CD4-positive, alpha-beta memory T cell (primary cell): ENCODE measurements at regions of chr14 and their contacts with region 1.

Region 1: GRCh38 chr14:49862089-49862673 is 9.6 kb upstream of the NEMF start:
- DNase-seq: peak; percentile 85 to 91 (median 88)
- H3K4me3 ChIP-seq: peak overlapping the region; percentile 61 to 76
- H3K4me3 Mint-ChIP-seq: no peak overlapping the region
- H3K27ac ChIP-seq: peak overlapping the region; percentile 97
- H3K27ac Mint-ChIP-seq: no peak overlapping the region
- H3K4me1 ChIP-seq: peaks cover 38% of the 10 kb centered on the region
- H3K4me1 Mint-ChIP-seq: peaks cover 0 to 11% (median 6%) of the 10 kb centered on the region in 4 donors
- H3K27me3 ChIP-seq: no peaks in the 10 kb centered on the region
- H3K27me3 Mint-ChIP-seq: peaks cover 3 to 8% of the 10 kb centered on the region in 2 donors

Region 2: GRCh38 chr14:49620182-49621113 is 241.7 kb before region 1 on chr14 and contains the starts of genes MGAT2 and RPL36AL:
- CTCF ChIA-PET with region 1: interaction called, 9 read pairs
- POLR2A ChIA-PET with region 1: interaction called, 28 read pairs
- intact Hi-C with region 1: no loop called
- DNase-seq: peak; percentile 95 to 97 (median 96)
- H3K4me3 ChIP-seq: peak within 1 kb of the TSS; percentile 99 to 100
- H3K4me3 Mint-ChIP-seq: peak within 1 kb of the TSS; percentile 95 to 99 (median 96)
- H3K27ac ChIP-seq: peak within 1 kb of the TSS; percentile 98
- H3K27ac Mint-ChIP-seq: peak within 1 kb of the TSS; percentile 98 to 100 (median 99)
- H3K4me1 ChIP-seq: peaks cover 65% of the 10 kb centered on the region
- H3K4me1 Mint-ChIP-seq: peaks cover 34 to 69% (median 43%) of the 10 kb centered on the region in 4 donors
- H3K27me3 ChIP-seq: no peaks in the 10 kb centered on the region
- H3K27me3 Mint-ChIP-seq: no peaks in the 10 kb centered on the region
- total RNA-seq, gene MGAT2: 58.5 to 58.7 TPM
- total RNA-seq, gene RPL36AL: 416 to 441 TPM

Region 3: GRCh38 chr14:49659526-49660455 is 202.4 kb before region 1 on chr14:
- CTCF ChIA-PET with region 1: no interaction called
- POLR2A ChIA-PET with region 1: no interaction called
- intact Hi-C with region 1: no loop called
- DNase-seq: no peak
- H3K4me3 ChIP-seq: no peak overlapping the region
- H3K4me3 Mint-ChIP-seq: no peak overlapping the region
- H3K27ac ChIP-seq: no peak overlapping the region
- H3K27ac Mint-ChIP-seq: peak overlapping the region in 1 of 7 donors; percentile 70
- H3K4me1 ChIP-seq: no peaks in the 10 kb centered on the region
- H3K4me1 Mint-ChIP-seq: no peaks in the 10 kb centered on the region
- H3K27me3 ChIP-seq: no peaks in the 10 kb centered on the region
- H3K27me3 Mint-ChIP-seq: no peaks in the 10 kb centered on the region

Region 4: GRCh38 chr14:49892636-49893308 is 30.6 kb after region 1 on chr14 and contains the start of gene ARF6:
- CTCF ChIA-PET with region 1: interaction called, 49 read pairs
- POLR2A ChIA-PET with region 1: interaction called, 89 read pairs
- intact Hi-C with region 1: loop called (anchors 1 kb)
- DNase-seq: peak; percentile 92 to 94 (median 92)
- H3K4me3 ChIP-seq: peak within 1 kb of the TSS; percentile 75 to 100
- H3K4me3 Mint-ChIP-seq: peak within 1 kb of the TSS; percentile 95 to 99 (median 98)
- H3K27ac ChIP-seq: peak within 1 kb of the TSS; percentile 98
- H3K27ac Mint-ChIP-seq: peak within 1 kb of the TSS; percentile 93 to 100 (median 99)
- H3K4me1 ChIP-seq: peaks cover 35% of the 10 kb centered on the region
- H3K4me1 Mint-ChIP-seq: peaks cover 13 to 45% (median 22%) of the 10 kb centered on the region in 4 donors
- H3K27me3 ChIP-seq: no peaks in the 10 kb centered on the region
- H3K27me3 Mint-ChIP-seq: no peaks in the 10 kb centered on the region
- total RNA-seq, gene ARF6: 116 to 124 TPM

Region 5: GRCh38 chr14:49977126-49977841 is 115.1 kb after region 1 on chr14:
- CTCF ChIA-PET with region 1: interaction called, 72 read pairs
- POLR2A ChIA-PET with region 1: interaction called, 81 read pairs
- intact Hi-C with region 1: no loop called
- DNase-seq: peak; percentile 48 to 66 (median 61)
- H3K4me3 ChIP-seq: peak overlapping the region; percentile 50 to 53
- H3K4me3 Mint-ChIP-seq: peak overlapping the region; percentile 75 to 89 (median 84)
- H3K27ac ChIP-seq: peak overlapping the region; percentile 48
- H3K27ac Mint-ChIP-seq: peak overlapping the region; percentile 91 to 95 (median 93)
- H3K4me1 ChIP-seq: peaks cover 100% of the 10 kb centered on the region
- H3K4me1 Mint-ChIP-seq: peaks cover 60 to 96% (median 87%) of the 10 kb centered on the region in 4 donors
- H3K27me3 ChIP-seq: no peaks in the 10 kb centered on the region
- H3K27me3 Mint-ChIP-seq: no peaks in the 10 kb centered on the region

Region 6: DNA sequence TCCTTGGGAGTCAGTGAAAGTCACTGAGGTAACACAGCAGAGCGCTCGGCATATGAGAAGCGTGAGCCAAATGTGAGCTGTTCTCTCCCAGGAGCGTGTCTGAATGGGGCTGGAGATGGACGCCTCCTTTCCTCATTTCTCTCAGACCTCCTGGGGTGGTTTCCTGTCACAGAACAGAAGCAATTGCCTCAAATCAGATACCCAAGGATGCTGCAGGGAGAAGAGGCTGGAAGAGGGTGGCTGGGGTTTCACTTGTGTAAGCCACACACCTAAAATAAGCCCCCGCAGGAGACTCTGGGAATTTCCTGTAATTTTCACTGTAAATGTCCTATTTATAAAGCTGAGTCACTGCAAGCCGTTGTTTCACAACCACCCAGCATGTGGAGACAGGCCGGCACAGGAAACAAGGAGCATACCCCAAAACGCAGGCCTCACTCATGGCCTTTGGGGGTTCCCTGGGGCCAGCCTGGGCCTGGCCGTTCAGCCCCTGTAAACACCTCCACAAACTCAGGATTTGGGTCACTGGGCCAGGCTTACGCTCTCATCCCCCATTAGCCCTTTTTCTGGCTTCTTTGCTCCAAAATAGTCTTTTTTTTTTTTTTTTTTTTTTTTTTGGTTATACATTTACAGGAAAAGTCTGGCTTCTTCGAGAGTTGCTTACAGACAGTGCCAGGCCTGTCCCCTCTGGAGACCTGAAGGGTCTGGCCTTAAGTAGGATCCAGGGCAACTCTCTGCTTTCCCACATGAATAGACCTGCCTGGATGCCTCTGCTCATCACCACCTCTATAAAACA is 198.9 kb after region 1 on chr14:
- CTCF ChIA-PET with region 1: interaction called, 182 read pairs
- POLR2A ChIA-PET with region 1: interaction called, 209 read pairs
- intact Hi-C with region 1: loop called (anchors 1 kb)
- DNase-seq: peak in 3 of 5 donors; percentile 15 to 76 (median 22)
- H3K4me3 ChIP-seq: peak overlapping the region in 1 of 2 donors; percentile 62
- H3K4me3 Mint-ChIP-seq: peak overlapping the region in 7 of 8 donors; percentile 87 to 98 (median 94)
- H3K27ac ChIP-seq: peak overlapping the region; percentile 83
- H3K27ac Mint-ChIP-seq: peak overlapping the region; percentile 92 to 100 (median 99)
- H3K4me1 ChIP-seq: peaks cover 82% of the 10 kb centered on the region
- H3K4me1 Mint-ChIP-seq: peaks cover 59 to 95% (median 78%) of the 10 kb centered on the region in 4 donors
- H3K27me3 ChIP-seq: no peaks in the 10 kb centered on the region
- H3K27me3 Mint-ChIP-seq: no peaks in the 10 kb centered on the region

Region 7: GRCh38 chr14:50116181-50116956 is 254.2 kb after region 1 on chr14 and contains the start of gene VCPKMT:
- CTCF ChIA-PET with region 1: interaction called, 39 read pairs
- POLR2A ChIA-PET with region 1: interaction called, 77 read pairs
- intact Hi-C with region 1: loop called (anchors 1 kb)
- DNase-seq: peak; percentile 93 to 96 (median 95)
- H3K4me3 ChIP-seq: peak within 1 kb of the TSS; percentile 65 to 69
- H3K4me3 Mint-ChIP-seq: peak within 1 kb of the TSS; percentile 97 to 98 (median 98)
- H3K27ac ChIP-seq: peak within 1 kb of the TSS; percentile 93
- H3K27ac Mint-ChIP-seq: peak within 1 kb of the TSS; percentile 96 to 100 (median 99)
- H3K4me1 ChIP-seq: peaks cover 34% of the 10 kb centered on the region
- H3K4me1 Mint-ChIP-seq: peaks cover 10 to 32% (median 23%) of the 10 kb centered on the region in 4 donors
- H3K27me3 ChIP-seq: no peaks in the 10 kb centered on the region
- H3K27me3 Mint-ChIP-seq: no peaks in the 10 kb centered on the region
- total RNA-seq, gene VCPKMT: 17.3 to 20.1 TPM